CD4-positive, alpha-beta memory T cell (primary cell): ENCODE measurements at regions of chr11 and their contacts with region 1.

Region 1: DNA sequence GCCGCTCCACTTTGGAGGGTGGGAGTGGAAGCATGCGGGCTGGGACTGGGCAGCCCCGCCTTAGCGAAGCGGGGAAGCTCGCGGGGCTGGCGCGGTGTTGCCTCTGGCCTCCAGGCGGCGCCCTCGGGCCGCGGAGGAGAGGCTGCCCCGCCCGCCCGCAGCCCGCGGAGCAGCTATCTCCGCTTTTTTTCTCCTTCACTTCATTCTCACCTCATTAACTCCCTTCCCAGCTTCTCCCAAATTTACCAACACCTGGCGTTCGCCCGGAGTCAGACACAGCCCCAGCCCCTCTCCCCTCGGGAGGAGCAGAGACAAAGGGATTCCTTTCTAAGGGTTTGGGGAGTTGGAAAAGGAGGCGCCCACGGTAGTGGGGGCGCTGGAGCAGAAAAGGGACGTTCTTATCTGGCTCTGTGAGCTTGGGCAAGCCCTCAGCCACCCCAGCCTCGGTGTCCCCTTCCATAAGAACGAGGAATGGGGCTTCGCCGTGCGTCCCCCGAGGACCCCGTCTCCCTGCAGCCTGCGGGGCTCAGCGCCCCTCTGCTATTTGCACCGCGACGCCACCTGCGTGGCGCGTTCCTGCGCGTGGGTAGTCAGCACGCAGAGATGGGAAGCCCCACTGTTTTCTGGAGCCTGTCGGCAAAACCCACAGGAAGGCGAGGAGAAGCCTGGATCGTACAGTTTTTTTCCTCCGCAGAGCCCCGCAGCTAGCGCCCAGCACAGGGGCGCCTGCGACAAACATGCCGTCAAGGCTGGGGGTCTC is 1.5 kb upstream of the WNT11 start:
- DNase-seq: peak; percentile 63 to 82 (median 76)
- H3K4me3 ChIP-seq: peak overlapping the region; percentile 63 to 72
- H3K4me3 Mint-ChIP-seq: peak overlapping the region; percentile 82 to 89 (median 86)
- H3K27ac ChIP-seq: no peak overlapping the region
- H3K27ac Mint-ChIP-seq: peak overlapping the region in 4 of 7 donors; percentile 22 to 60 (median 50)
- H3K4me1 ChIP-seq: peaks cover 35% of the 10 kb centered on the region
- H3K4me1 Mint-ChIP-seq: peaks cover 8 to 33% (median 17%) of the 10 kb centered on the region in 4 donors
- H3K27me3 ChIP-seq: peaks cover 22% of the 10 kb centered on the region
- H3K27me3 Mint-ChIP-seq: peaks cover 28 to 38% of the 10 kb centered on the region in 2 donors

Region 2: GRCh38 chr11:76102802-76103201 is 105.0 kb before region 1 on chr11:
- CTCF ChIA-PET with region 1: no interaction called
- POLR2A ChIA-PET with region 1: no interaction called
- intact Hi-C with region 1: no loop called
- DNase-seq: no peak
- H3K4me3 ChIP-seq: no peak overlapping the region
- H3K4me3 Mint-ChIP-seq: no peak overlapping the region
- H3K27ac ChIP-seq: no peak overlapping the region
- H3K27ac Mint-ChIP-seq: no peak overlapping the region
- H3K4me1 ChIP-seq: no peaks in the 10 kb centered on the region
- H3K4me1 Mint-ChIP-seq: no peaks in the 10 kb centered on the region
- H3K27me3 ChIP-seq: no peaks in the 10 kb centered on the region
- H3K27me3 Mint-ChIP-seq: no peaks in the 10 kb centered on the region

Region 3: DNA sequence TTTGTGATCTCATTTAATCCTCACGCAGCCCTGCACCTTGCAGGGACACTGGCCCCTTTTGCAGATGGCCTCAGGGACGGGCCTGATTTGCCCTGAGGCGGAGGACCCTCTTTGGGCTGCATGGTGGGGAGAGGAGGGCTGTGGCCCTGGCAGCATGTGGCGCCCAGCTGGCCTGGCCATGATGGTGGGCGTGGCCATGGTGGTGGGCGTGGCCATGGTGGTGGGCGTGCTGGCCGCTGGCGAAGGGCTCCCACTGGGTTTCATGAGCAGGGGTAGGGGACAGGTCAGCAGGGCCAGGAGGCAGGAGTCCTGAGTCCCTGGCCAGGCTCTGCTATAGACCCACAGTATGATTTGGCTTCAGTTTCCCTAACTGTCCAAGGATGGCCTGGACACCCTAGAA is 14.6 kb before region 1 on chr11:
- CTCF ChIA-PET with region 1: interaction called, 13 read pairs
- POLR2A ChIA-PET with region 1: no interaction called
- intact Hi-C with region 1: no loop called
- DNase-seq: peak in 1 of 5 donors; percentile 29
- H3K4me3 ChIP-seq: no peak overlapping the region
- H3K4me3 Mint-ChIP-seq: no peak overlapping the region
- H3K27ac ChIP-seq: no peak overlapping the region
- H3K27ac Mint-ChIP-seq: no peak overlapping the region
- H3K4me1 ChIP-seq: no peaks in the 10 kb centered on the region
- H3K4me1 Mint-ChIP-seq: no peaks in the 10 kb centered on the region
- H3K27me3 ChIP-seq: no peaks in the 10 kb centered on the region
- H3K27me3 Mint-ChIP-seq: no peaks in the 10 kb centered on the region

Region 4: DNA sequence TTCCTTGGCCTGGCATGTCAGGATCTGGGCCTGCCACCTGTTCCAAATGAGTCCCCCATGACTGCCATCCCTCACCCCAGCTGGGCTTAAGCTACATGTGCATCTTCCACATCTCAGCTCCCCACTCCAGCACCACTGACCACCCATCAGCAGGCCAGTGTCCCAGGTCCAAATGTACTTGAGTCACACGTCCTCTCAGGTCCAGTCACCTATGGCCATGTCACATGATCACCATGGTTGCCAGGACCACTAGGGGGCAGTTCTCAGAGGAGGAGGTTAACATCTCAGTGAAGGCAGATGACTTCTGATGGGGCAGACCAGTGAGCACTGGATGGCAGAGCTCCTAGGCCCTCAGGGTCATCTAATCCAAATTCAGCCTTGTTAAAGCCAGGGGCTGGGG is 40.4 kb after region 1 on chr11:
- CTCF ChIA-PET with region 1: interaction called, 12 read pairs
- POLR2A ChIA-PET with region 1: no interaction called
- intact Hi-C with region 1: no loop called
- DNase-seq: no peak
- H3K4me3 ChIP-seq: no peak overlapping the region
- H3K4me3 Mint-ChIP-seq: no peak overlapping the region
- H3K27ac ChIP-seq: no peak overlapping the region
- H3K27ac Mint-ChIP-seq: no peak overlapping the region
- H3K4me1 ChIP-seq: no peaks in the 10 kb centered on the region
- H3K4me1 Mint-ChIP-seq: peaks cover 0 to 3% (median 0%) of the 10 kb centered on the region in 4 donors
- H3K27me3 ChIP-seq: no peaks in the 10 kb centered on the region
- H3K27me3 Mint-ChIP-seq: peaks cover 2 to 7% of the 10 kb centered on the region in 2 donors

Region 5: GRCh38 chr11:76327756-76328380 is 120.0 kb after region 1 on chr11:
- CTCF ChIA-PET with region 1: interaction called, 288 read pairs
- POLR2A ChIA-PET with region 1: no interaction called
- intact Hi-C with region 1: no loop called
- DNase-seq: no peak
- H3K4me3 ChIP-seq: no peak overlapping the region
- H3K4me3 Mint-ChIP-seq: no peak overlapping the region
- H3K27ac ChIP-seq: no peak overlapping the region
- H3K27ac Mint-ChIP-seq: no peak overlapping the region
- H3K4me1 ChIP-seq: no peaks in the 10 kb centered on the region
- H3K4me1 Mint-ChIP-seq: peaks cover 0 to 11% (median 5%) of the 10 kb centered on the region in 4 donors
- H3K27me3 ChIP-seq: no peaks in the 10 kb centered on the region
- H3K27me3 Mint-ChIP-seq: peaks cover 6 to 8% of the 10 kb centered on the region in 2 donors

Region 6: GRCh38 chr11:76444384-76445123 is 236.7 kb after region 1 on chr11 and contains the start of gene EMSY:
- CTCF ChIA-PET with region 1: no interaction called
- POLR2A ChIA-PET with region 1: interaction called, 3 read pairs
- intact Hi-C with region 1: loop called (anchors 1 kb)
- DNase-seq: peak; percentile 92 to 96 (median 94)
- H3K4me3 ChIP-seq: peak within 1 kb of the TSS; percentile 78 to 84
- H3K4me3 Mint-ChIP-seq: peak within 1 kb of the TSS; percentile 90 to 97 (median 97)
- H3K27ac ChIP-seq: peak within 1 kb of the TSS; percentile 92
- H3K27ac Mint-ChIP-seq: peak within 1 kb of the TSS; percentile 94 to 98 (median 98)
- H3K4me1 ChIP-seq: peaks cover 30% of the 10 kb centered on the region
- H3K4me1 Mint-ChIP-seq: peaks cover 25 to 40% (median 34%) of the 10 kb centered on the region in 4 donors
- H3K27me3 ChIP-seq: no peaks in the 10 kb centered on the region
- H3K27me3 Mint-ChIP-seq: no peaks in the 10 kb centered on the region
- total RNA-seq, gene EMSY: 46.3 to 52.9 TPM